H1 (cell line): ENCODE measurements at regions of chr11 and their contacts with region 1.

Region 1: DNA sequence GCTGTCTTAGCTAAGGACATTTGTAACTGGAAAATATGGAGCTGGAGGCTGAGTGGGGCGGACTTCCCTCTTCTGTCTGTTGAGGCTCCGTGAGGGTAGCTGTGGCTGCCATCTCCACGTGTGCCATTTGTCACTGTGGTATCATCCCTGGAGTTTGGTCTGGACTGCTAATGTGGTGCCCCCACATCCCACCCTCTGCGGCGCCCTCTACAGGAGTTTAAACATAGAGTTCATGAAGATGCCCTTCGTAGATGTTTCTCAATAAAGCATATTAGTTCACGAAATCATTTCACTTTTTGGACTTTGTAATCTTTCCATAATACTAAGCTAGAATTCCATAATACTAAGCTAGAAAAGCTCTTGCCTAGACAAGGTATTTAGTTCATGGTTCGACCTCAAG is 52.4 kb downstream of the TECTA start:
- DNase-seq: no peak
- H3K4me3 ChIP-seq: no peak overlapping the region
- H3K27ac ChIP-seq: no peak overlapping the region
- H3K4me1 ChIP-seq: no peaks in the 10 kb centered on the region; a peak in 1 of 7 replicates
- H3K27me3 ChIP-seq: no peaks in the 10 kb centered on the region; a peak in 1 of 7 replicates
- CTCF ChIP-seq: peak; percentile 52 to 67 (median 52)
- EP300 ChIP-seq: no peak
- POLR2A ChIP-seq: no peak
- RAD21 ChIP-seq: peak; percentile 28 to 52; a peak in 3 of 4 replicates

Region 2: GRCh38 chr11:121119440-121119839 is 34.0 kb before region 1 on chr11:
- CTCF ChIA-PET with region 1: interaction called, 40 read pairs
- POLR2A ChIA-PET with region 1: no interaction called
- DNase-seq: no peak
- H3K4me3 ChIP-seq: no peak overlapping the region
- H3K27ac ChIP-seq: no peak overlapping the region
- H3K4me1 ChIP-seq: no peaks in the 10 kb centered on the region
- H3K27me3 ChIP-seq: no peaks in the 10 kb centered on the region
- CTCF ChIP-seq: peak in 1 of 3 experiments; percentile 15; a peak in 1 of 4 replicates
- EP300 ChIP-seq: no peak
- POLR2A ChIP-seq: no peak
- RAD21 ChIP-seq: peak in 1 of 2 experiments; percentile 18; a peak in 1 of 4 replicates

Region 3: GRCh38 chr11:121132196-121132976 is 21.1 kb before region 1 on chr11:
- CTCF ChIA-PET with region 1: interaction called, 12 read pairs
- POLR2A ChIA-PET with region 1: no interaction called
- DNase-seq: no peak
- H3K4me3 ChIP-seq: no peak overlapping the region
- H3K27ac ChIP-seq: no peak overlapping the region
- H3K4me1 ChIP-seq: no peaks in the 10 kb centered on the region
- H3K27me3 ChIP-seq: no peaks in the 10 kb centered on the region
- CTCF ChIP-seq: peak in 1 of 3 experiments; percentile 3; a peak in 1 of 4 replicates
- EP300 ChIP-seq: no peak
- POLR2A ChIP-seq: no peak
- RAD21 ChIP-seq: no peak

Region 4: GRCh38 chr11:121141066-121141465 is 12.4 kb before region 1 on chr11:
- CTCF ChIA-PET with region 1: interaction called, 17 read pairs
- POLR2A ChIA-PET with region 1: no interaction called
- DNase-seq: no peak
- H3K4me3 ChIP-seq: no peak overlapping the region
- H3K27ac ChIP-seq: no peak overlapping the region
- H3K4me1 ChIP-seq: no peaks in the 10 kb centered on the region
- H3K27me3 ChIP-seq: no peaks in the 10 kb centered on the region
- CTCF ChIP-seq: no peak
- EP300 ChIP-seq: no peak
- POLR2A ChIP-seq: no peak
- RAD21 ChIP-seq: no peak

Region 5: DNA sequence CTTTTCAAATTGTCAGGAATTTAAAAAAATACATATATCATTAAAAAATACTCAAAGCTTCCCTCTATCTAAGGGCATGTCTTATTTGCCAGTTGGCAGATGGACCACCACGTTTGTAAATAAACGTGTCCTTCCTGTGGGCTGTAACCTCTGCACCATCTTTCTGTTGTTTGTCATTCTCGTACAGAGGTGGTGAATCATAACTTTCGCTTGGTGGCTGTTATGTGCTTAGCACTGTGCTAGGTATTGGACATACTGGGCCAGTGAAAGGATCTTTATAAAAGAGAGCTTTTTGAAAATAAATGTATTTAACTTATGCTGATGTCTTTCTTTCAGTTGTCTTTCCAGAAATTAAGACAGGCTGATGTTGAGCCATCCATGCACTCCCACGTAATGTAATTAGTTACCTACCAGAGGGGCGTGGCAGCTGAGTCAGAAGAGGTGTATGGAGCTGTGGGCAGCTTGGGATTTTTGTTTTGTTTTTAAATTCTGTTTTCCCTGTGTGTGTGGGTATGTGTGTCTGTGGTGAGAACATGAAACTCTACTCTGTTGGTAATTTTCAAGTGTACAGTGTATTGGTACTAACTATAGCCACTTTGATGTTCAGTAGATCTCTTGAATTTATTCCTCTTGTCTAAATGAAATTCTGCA is 10.3 kb after region 1 on chr11:
- CTCF ChIA-PET with region 1: interaction called, 28 read pairs
- POLR2A ChIA-PET with region 1: no interaction called
- DNase-seq: no peak
- H3K4me3 ChIP-seq: no peak overlapping the region
- H3K27ac ChIP-seq: no peak overlapping the region
- H3K4me1 ChIP-seq: peaks cover 0 to 10% (median 9%) of the 10 kb centered on the region in 4 experiments; a peak in 5 of 7 replicates
- H3K27me3 ChIP-seq: no peaks in the 10 kb centered on the region
- CTCF ChIP-seq: no peak
- EP300 ChIP-seq: no peak
- POLR2A ChIP-seq: no peak
- RAD21 ChIP-seq: no peak